ENCODE measurements at regions of chr16 and their contacts with region 1.

Region 1: GRCh38 chr16:25051406-25052150 is 36.4 kb upstream of the ARHGAP17 start:
- DNase-seq: peak in 2 of 5 donors; percentile 39 to 43
- ATAC-seq: peak; percentile 58 to 69 (median 64)
- H3K4me3 ChIP-seq: peak overlapping the region in 8 of 12 donors; percentile 5 to 34 (median 25)
- H3K27ac ChIP-seq: peak overlapping the region; percentile 70 to 97 (median 84)
- H3K4me1 ChIP-seq: peaks cover 3 to 50% (median 26%) of the 10 kb centered on the region in 12 donors
- H3K27me3 ChIP-seq: no peaks in the 10 kb centered on the region
- CTCF ChIP-seq: no peak
- POLR2A ChIP-seq: peak in 1 of 2 donors; percentile 30

Region 2: DNA sequence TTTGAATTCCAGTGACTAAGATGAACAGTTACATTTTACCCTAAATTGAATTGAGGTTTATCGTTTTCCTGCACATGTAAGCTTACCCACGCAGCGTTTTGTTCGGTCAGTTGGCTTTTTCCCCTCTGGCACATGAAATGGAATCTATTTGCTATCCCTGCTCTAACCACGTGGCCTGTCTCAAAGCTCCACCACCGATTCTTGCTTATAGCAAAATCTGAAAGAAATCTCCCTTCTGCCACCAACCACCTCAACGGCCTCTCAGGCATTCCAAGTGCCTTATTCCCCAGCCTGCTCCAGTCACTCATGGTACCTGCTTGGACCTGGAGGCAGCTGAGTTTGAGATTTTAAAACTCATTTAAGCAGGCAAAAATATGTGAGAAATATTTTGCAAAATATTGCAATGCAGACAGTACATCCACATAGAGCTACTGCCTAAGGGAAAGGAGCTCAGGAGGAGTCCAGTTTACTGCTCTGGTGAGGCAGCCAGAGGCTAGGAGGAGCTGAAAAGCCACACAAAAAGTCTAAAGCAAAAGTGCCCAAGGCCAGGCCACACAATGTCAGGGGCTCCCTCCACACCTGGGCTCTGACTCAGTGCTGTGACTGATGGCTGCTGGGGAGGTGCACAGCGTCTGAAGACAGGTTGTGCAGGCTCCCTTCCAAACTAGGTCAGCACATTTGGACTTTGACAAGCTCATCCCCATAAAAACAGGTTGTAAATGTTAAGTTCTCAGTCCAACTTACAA is 62.8 kb before region 1 on chr16:
- intact Hi-C with region 1: loop called in 3 of 10 experiments (anchors 5 kb)
- DNase-seq: peak in 3 of 5 donors; percentile 41 to 62 (median 43)
- ATAC-seq: peak in 3 of 4 donors; percentile 29 to 57 (median 57)
- H3K4me3 ChIP-seq: peak overlapping the region in 5 of 12 donors; percentile 0 to 30 (median 7)
- H3K27ac ChIP-seq: peak overlapping the region; percentile 65 to 90 (median 84)
- H3K4me1 ChIP-seq: peaks cover 40 to 100% (median 97%) of the 10 kb centered on the region in 12 donors
- H3K27me3 ChIP-seq: no peaks in the 10 kb centered on the region
- CTCF ChIP-seq: no peak
- POLR2A ChIP-seq: no peak

Region 3: GRCh38 chr16:25111403-25112166 is 60.0 kb after region 1 on chr16 and contains the start of gene LCMT1:
- intact Hi-C with region 1: loop called in 4 of 10 experiments (anchors 5 kb)
- DNase-seq: peak; percentile 89 to 94 (median 94)
- ATAC-seq: peak; percentile 85 to 91 (median 89)
- H3K4me3 ChIP-seq: peak within 1 kb of the TSS; percentile 47 to 99 (median 94)
- H3K27ac ChIP-seq: peak within 1 kb of the TSS; percentile 60 to 93 (median 87)
- H3K4me1 ChIP-seq: peaks cover 0 to 46% (median 34%) of the 10 kb centered on the region in 12 donors
- H3K27me3 ChIP-seq: no peaks in the 10 kb centered on the region
- CTCF ChIP-seq: peak in 3 of 12 donors; percentile 5 to 14 (median 9)
- POLR2A ChIP-seq: peak in 1 of 2 donors; percentile 69
- total RNA-seq, gene LCMT1: 33.6 to 50.0 (median 39.6) TPM

Region 4: DNA sequence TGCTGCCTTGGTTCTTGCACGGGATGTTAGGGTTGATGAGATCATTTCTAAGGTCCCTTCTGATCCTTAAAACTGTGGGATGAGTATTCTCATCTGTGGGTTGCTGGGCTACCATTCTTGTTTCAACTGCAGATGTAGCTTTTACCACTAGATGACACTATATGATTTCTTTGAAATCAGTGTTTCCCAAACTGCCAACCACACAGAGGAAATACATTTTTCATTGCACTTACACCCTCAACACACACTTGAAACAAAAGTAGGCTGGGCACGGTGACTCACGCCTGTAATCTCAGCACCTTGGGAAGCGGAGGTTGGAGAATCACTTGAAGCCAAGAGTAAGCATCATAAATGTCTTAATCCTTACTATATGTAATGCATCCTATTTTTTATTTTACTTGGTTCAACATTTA is 75.2 kb after region 1 on chr16:
- intact Hi-C with region 1: loop called in 8 of 10 experiments (anchors 1 to 5 kb)
- DNase-seq: no peak
- ATAC-seq: peak in 2 of 4 donors; percentile 38 to 42
- H3K4me3 ChIP-seq: no peak overlapping the region
- H3K27ac ChIP-seq: no peak overlapping the region
- H3K4me1 ChIP-seq: peaks cover 0 to 5% (median 0%) of the 10 kb centered on the region in 12 donors
- H3K27me3 ChIP-seq: no peaks in the 10 kb centered on the region
- CTCF ChIP-seq: peak in 11 of 12 donors; percentile 9 to 55 (median 34)
- POLR2A ChIP-seq: no peak

Measured in heart left ventricle (tissue), 16 donors.